ENCODE measurements at regions of chr3 and their contacts with region 1.

Region 1: DNA sequence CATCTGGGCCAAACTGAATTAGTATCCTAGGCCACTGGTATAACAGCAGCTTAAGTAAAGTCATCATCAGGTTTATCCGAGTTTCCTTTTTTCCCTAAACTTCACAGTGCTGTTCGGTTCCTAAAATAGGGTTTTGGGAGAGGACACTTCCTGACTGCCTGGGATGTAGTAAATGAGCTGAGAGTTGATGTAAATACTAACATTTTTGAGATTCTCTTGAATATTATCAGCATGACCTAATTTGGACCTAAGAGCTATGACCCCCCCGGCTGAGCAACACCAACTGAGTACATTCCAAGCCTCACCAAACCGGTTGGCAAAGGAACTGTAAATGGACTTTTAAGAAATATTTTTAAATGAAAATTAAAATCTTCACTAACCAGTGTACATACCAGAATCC is 78.8 kb downstream of the IL5RA start:
- DNase-seq: peak in 1 of 2 experiments; percentile 31
- H3K4me3 ChIP-seq: no peak overlapping the region
- H3K4me3 Mint-ChIP-seq: no peak overlapping the region
- H3K27ac Mint-ChIP-seq: peak overlapping the region; percentile 59
- H3K4me1 ChIP-seq: peaks cover 28% of the 10 kb centered on the region
- H3K4me1 Mint-ChIP-seq: peaks cover 27% of the 10 kb centered on the region
- H3K27me3 ChIP-seq: no peaks in the 10 kb centered on the region
- H3K27me3 Mint-ChIP-seq: no peaks in the 10 kb centered on the region
- CTCF ChIP-seq: no peak

Region 2: GRCh38 chr3:2495746-2496145 is 535.6 kb before region 1 on chr3:
- CTCF ChIA-PET with region 1: no interaction called
- POLR2A ChIA-PET with region 1: no interaction called
- intact Hi-C with region 1: no loop called
- DNase-seq: no peak
- H3K4me3 ChIP-seq: no peak overlapping the region
- H3K4me3 Mint-ChIP-seq: no peak overlapping the region
- H3K27ac Mint-ChIP-seq: no peak overlapping the region
- H3K4me1 ChIP-seq: no peaks in the 10 kb centered on the region
- H3K4me1 Mint-ChIP-seq: no peaks in the 10 kb centered on the region
- H3K27me3 ChIP-seq: no peaks in the 10 kb centered on the region
- H3K27me3 Mint-ChIP-seq: no peaks in the 10 kb centered on the region
- CTCF ChIP-seq: no peak

Region 3: GRCh38 chr3:2968475-2968874 is 62.9 kb before region 1 on chr3:
- CTCF ChIA-PET with region 1: no interaction called
- POLR2A ChIA-PET with region 1: no interaction called
- intact Hi-C with region 1: no loop called
- DNase-seq: no peak
- H3K4me3 ChIP-seq: no peak overlapping the region
- H3K4me3 Mint-ChIP-seq: peak overlapping the region; percentile 27
- H3K27ac Mint-ChIP-seq: no peak overlapping the region
- H3K4me1 ChIP-seq: peaks cover 28% of the 10 kb centered on the region
- H3K4me1 Mint-ChIP-seq: peaks cover 6% of the 10 kb centered on the region
- H3K27me3 ChIP-seq: no peaks in the 10 kb centered on the region
- H3K27me3 Mint-ChIP-seq: no peaks in the 10 kb centered on the region
- CTCF ChIP-seq: no peak

Region 4: GRCh38 chr3:3053974-3054373 is 22.6 kb after region 1 on chr3:
- CTCF ChIA-PET with region 1: no interaction called
- POLR2A ChIA-PET with region 1: no interaction called
- intact Hi-C with region 1: loop called (anchors 1 kb)
- DNase-seq: peak; percentile 51 to 54
- H3K4me3 ChIP-seq: peak overlapping the region; percentile 17
- H3K4me3 Mint-ChIP-seq: peak overlapping the region; percentile 68
- H3K27ac Mint-ChIP-seq: peak overlapping the region; percentile 93
- H3K4me1 ChIP-seq: peaks cover 43% of the 10 kb centered on the region
- H3K4me1 Mint-ChIP-seq: peaks cover 32% of the 10 kb centered on the region
- H3K27me3 ChIP-seq: no peaks in the 10 kb centered on the region
- H3K27me3 Mint-ChIP-seq: no peaks in the 10 kb centered on the region
- CTCF ChIP-seq: no peak

Region 5: GRCh38 chr3:3842356-3842755 is 811.0 kb after region 1 on chr3:
- CTCF ChIA-PET with region 1: no interaction called
- POLR2A ChIA-PET with region 1: no interaction called
- intact Hi-C with region 1: no loop called
- DNase-seq: no peak
- H3K4me3 ChIP-seq: no peak overlapping the region
- H3K4me3 Mint-ChIP-seq: no peak overlapping the region
- H3K27ac Mint-ChIP-seq: no peak overlapping the region
- H3K4me1 ChIP-seq: no peaks in the 10 kb centered on the region
- H3K4me1 Mint-ChIP-seq: no peaks in the 10 kb centered on the region
- H3K27me3 ChIP-seq: no peaks in the 10 kb centered on the region
- H3K27me3 Mint-ChIP-seq: no peaks in the 10 kb centered on the region
- CTCF ChIP-seq: no peak

Measured in Caco-2 (cell line).